Activated CD8-positive, alpha-beta T cell treated with anti-CD3 and anti-CD28 coated beads for 36 hours (primary cell): ENCODE measurements at regions of chr11 and their contacts with region 1.

Region 1: DNA sequence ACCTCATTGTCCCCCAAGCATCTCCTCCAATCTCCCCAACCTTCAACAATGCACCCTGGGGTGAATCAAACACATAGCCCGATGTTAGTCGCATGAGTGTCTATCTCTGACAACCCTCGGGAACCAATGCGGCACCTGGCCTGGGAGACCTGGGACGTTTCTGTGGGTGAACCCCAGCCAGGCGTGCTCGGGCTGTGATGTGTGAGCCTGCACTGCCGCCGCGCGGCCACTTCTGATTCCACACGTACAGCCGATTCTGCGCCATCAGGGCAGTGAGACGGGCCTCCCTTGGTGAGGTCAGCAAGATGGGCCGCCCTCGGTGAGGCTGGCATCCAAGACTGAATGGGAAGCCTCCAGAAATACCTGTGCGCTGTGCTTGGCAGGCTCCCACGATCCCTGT is 5.2 kb upstream of the H19 start:
- DNase-seq: no peak
- ATAC-seq: peak; percentile 76
- H3K4me3 Mint-ChIP-seq: no peak overlapping the region
- H3K27ac Mint-ChIP-seq: no peak overlapping the region
- H3K4me1 Mint-ChIP-seq: no peaks in the 10 kb centered on the region
- H3K27me3 Mint-ChIP-seq: no peaks in the 10 kb centered on the region
- CTCF ChIP-seq: no peak

Region 2: GRCh38 chr11:1837171-1838076 is 165.4 kb before region 1 on chr11:
- CTCF ChIA-PET with region 1: interaction called, 74 read pairs
- POLR2A ChIA-PET with region 1: no interaction called
- intact Hi-C with region 1: no loop called
- DNase-seq: peak; percentile 91
- ATAC-seq: peak; percentile 97
- H3K4me3 Mint-ChIP-seq: no peak overlapping the region
- H3K27ac Mint-ChIP-seq: no peak overlapping the region
- H3K4me1 Mint-ChIP-seq: peaks cover 6% of the 10 kb centered on the region
- H3K27me3 Mint-ChIP-seq: no peaks in the 10 kb centered on the region
- CTCF ChIP-seq: peak; percentile 94

Region 3: DNA sequence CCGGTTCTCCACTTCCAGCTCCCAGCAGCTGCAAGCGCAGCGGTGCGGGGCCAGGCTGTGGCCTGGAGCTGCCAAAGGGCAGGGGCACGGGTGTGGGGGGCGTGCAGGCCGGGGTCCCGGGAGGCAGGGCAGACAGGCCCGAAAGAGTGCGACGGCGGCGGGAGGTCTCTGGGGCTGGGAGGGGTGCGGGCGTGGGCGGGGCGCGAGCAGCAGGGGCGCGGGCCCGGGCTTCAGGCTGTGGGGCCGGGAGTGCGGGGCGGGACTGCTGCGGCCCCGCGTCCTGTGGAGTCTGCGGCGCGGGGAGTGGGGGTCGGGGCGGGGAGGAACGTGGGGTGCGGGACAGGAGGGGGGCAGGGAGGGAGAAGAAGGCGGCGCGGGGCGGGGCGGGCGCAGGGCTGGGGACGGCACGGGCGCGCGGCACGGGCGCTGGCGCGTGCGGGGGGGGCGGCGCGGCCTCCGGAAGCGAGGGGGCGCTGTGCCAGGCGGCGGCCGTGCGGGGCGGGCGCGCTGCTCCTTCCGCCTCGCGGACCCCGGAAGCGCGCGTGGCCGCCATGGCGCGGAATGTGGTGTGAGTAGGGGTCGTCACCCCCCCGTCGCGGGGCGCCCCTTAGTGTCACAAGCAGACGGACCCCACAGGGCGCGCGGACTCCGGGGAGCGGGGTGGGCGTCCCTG is 55.9 kb before region 1 on chr11 and contains the start of gene MRPL23:
- CTCF ChIA-PET with region 1: interaction called, 10 read pairs
- POLR2A ChIA-PET with region 1: no interaction called
- intact Hi-C with region 1: no loop called
- DNase-seq: peak; percentile 29
- ATAC-seq: peak; percentile 88
- H3K4me3 Mint-ChIP-seq: no peak within 1 kb of the TSS
- H3K27ac Mint-ChIP-seq: no peak within 1 kb of the TSS
- H3K4me1 Mint-ChIP-seq: no peaks in the 10 kb centered on the region
- H3K27me3 Mint-ChIP-seq: no peaks in the 10 kb centered on the region
- CTCF ChIP-seq: no peak
- total RNA-seq, gene MRPL23: 134 to 145 TPM

Region 4: GRCh38 chr11:1970956-1971355 is 31.9 kb before region 1 on chr11:
- CTCF ChIA-PET with region 1: no interaction called
- POLR2A ChIA-PET with region 1: no interaction called
- intact Hi-C with region 1: no loop called
- DNase-seq: no peak
- ATAC-seq: no peak
- H3K4me3 Mint-ChIP-seq: no peak overlapping the region
- H3K27ac Mint-ChIP-seq: no peak overlapping the region
- H3K4me1 Mint-ChIP-seq: no peaks in the 10 kb centered on the region
- H3K27me3 Mint-ChIP-seq: no peaks in the 10 kb centered on the region
- CTCF ChIP-seq: no peak

Region 5: GRCh38 chr11:2120359-2121100 is 117.7 kb after region 1 on chr11:
- CTCF ChIA-PET with region 1: no interaction called
- POLR2A ChIA-PET with region 1: no interaction called
- intact Hi-C with region 1: no loop called
- DNase-seq: no peak
- ATAC-seq: no peak
- H3K4me3 Mint-ChIP-seq: no peak overlapping the region
- H3K27ac Mint-ChIP-seq: no peak overlapping the region
- H3K4me1 Mint-ChIP-seq: no peaks in the 10 kb centered on the region
- H3K27me3 Mint-ChIP-seq: peaks cover 14% of the 10 kb centered on the region
- CTCF ChIP-seq: no peak